ENCODE measurements at regions of chr1 and their contacts with region 1.

Region 1: DNA sequence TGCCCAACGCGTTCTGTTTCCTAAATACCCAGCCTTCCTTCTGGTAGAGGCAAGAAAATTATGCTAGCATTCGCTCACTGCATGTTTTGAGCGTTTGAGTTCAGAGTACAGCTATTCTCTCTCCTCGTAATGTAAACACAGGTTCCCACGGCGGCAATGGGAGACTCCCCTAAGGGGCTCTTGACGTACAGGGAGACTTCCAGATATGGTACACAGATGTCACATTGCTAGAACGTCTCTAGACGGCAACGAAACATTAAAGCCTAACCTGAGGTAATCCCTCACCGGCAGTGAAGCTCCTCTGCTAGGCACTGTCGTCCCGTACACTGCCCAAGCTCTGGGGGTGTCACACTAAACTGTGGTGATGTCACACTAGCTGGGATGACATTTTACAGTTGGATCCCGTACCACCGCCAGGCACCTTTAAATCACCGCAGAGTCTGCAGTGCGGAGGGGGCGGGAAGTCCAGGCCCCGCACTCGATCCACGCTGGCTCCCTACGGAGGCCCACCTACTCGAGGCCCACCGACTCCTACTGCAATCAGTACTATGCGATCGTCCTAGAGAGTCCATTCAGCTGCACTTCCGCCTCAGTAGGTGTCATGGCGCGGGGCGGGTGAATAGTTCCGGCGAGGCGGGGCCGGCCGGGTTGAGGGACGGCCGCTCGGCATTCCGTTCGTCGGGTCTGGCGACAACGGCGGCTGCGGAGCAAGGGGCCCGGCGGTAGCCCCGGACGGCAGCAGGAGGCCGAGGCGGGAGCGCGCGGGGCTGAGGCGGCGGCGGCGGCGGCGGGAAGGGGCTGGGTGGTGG is at the start of gene HIPK1:
- DNase-seq: peak; percentile 60
- ATAC-seq: peak; percentile 73
- H3K4me3 ChIP-seq: peak within 1 kb of the TSS; percentile 78
- H3K27ac ChIP-seq: peak within 1 kb of the TSS; percentile 97
- H3K4me1 ChIP-seq: peaks cover 4% of the 10 kb centered on the region
- H3K27me3 ChIP-seq: no peaks in the 10 kb centered on the region
- CTCF ChIP-seq: no peak
- EP300 ChIP-seq: 0 out of 4 replicates have a peak, but pooled peaks of 1 of the 2 experiments have one; percentile 36
- POLR2A ChIP-seq: peak; percentile 88
- RAD21 ChIP-seq: 0 out of 2 replicates have a peak, but pooled peaks have one; percentile 7
- polyA plus RNA-seq, gene HIPK1: 4.2 to 4.5 TPM

Region 2: DNA sequence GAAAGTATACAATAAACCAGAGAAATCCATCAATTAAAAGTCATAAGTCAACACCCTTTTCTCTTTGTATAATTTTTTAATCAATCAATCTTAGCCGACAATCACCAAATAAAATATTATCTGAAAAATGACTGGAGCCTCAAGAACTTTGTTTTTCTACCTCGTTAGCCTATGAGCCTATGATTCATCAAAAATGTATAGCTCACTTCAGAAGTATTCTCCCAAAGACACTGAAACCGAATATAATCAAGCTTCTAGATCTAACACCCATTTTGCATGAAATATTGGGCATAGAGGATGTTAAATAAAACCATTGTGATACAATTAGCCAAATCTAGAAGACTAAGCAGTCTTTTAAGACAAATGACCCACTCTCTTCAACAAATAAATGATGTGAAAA is 99.1 kb before region 1 on chr1:
- CTCF ChIA-PET with region 1: interaction called, 30 read pairs
- POLR2A ChIA-PET with region 1: interaction called, 6 read pairs
- RAD21 ChIA-PET with region 1: interaction called, 19 read pairs
- SMC1A ChIA-PET with region 1: interaction called, 32 read pairs
- in situ Hi-C with region 1: loop called (anchors 5 kb)
- intact Hi-C with region 1: loop called (anchors 5 kb)
- DNase-seq: no peak
- ATAC-seq: no peak
- H3K4me3 ChIP-seq: no peak overlapping the region
- H3K27ac ChIP-seq: no peak overlapping the region
- H3K4me1 ChIP-seq: no peaks in the 10 kb centered on the region
- H3K27me3 ChIP-seq: no peaks in the 10 kb centered on the region
- CTCF ChIP-seq: no peak
- EP300 ChIP-seq: no peak
- POLR2A ChIP-seq: no peak
- RAD21 ChIP-seq: no peak

Region 3: DNA sequence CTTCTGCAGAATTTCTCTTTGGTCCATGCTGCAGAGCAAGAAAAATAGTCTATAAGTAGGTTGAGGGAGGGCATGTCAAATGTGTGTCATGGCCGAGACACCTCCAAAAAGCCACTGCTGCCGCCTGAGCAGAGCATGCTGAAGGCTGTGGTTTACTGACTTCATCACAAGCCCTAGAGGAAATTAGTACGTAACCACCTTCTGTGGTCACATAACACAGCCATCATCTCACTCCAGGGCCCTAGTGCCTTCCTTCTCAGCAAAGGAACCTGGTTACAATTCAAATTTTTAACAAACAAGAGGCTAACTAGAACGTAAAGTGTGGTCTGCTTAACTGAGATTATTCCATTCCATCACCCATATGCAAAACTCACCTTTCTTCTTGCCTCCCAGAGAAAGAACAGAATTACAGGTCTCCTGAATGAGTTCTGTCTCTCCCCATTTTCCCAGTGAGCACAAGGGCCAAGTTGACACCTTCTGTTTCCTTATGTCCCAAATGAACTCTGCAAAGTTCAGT is 57.5 kb before region 1 on chr1 and contains the start of gene PTPN22:
- CTCF ChIA-PET with region 1: interaction called, 15 read pairs
- POLR2A ChIA-PET with region 1: interaction called, 23 read pairs
- RAD21 ChIA-PET with region 1: interaction called, 14 read pairs
- SMC1A ChIA-PET with region 1: interaction called, 17 read pairs
- in situ Hi-C with region 1: no loop called
- intact Hi-C with region 1: no loop called
- DNase-seq: peak; percentile 90
- ATAC-seq: peak; percentile 87
- H3K4me3 ChIP-seq: peak within 1 kb of the TSS; percentile 89
- H3K27ac ChIP-seq: peak within 1 kb of the TSS; percentile 79
- H3K4me1 ChIP-seq: peaks cover 47% of the 10 kb centered on the region
- H3K27me3 ChIP-seq: no peaks in the 10 kb centered on the region
- CTCF ChIP-seq: no peak
- EP300 ChIP-seq: peak in 1 of 2 experiments; percentile 86; a peak in 3 of 4 replicates
- POLR2A ChIP-seq: peak; percentile 90
- RAD21 ChIP-seq: no peak
- polyA plus RNA-seq, gene PTPN22: 30.3 to 32.3 TPM

Region 4: GRCh38 chr1:113916974-113917373 is 12.2 kb before region 1 on chr1:
- CTCF ChIA-PET with region 1: interaction called, 7 read pairs
- POLR2A ChIA-PET with region 1: interaction called, 8 read pairs
- RAD21 ChIA-PET with region 1: interaction called, 8 read pairs
- SMC1A ChIA-PET with region 1: interaction called, 16 read pairs
- in situ Hi-C with region 1: no loop called
- intact Hi-C with region 1: no loop called
- DNase-seq: no peak
- ATAC-seq: no peak
- H3K4me3 ChIP-seq: no peak overlapping the region
- H3K27ac ChIP-seq: no peak overlapping the region
- H3K4me1 ChIP-seq: no peaks in the 10 kb centered on the region
- H3K27me3 ChIP-seq: no peaks in the 10 kb centered on the region
- CTCF ChIP-seq: no peak
- EP300 ChIP-seq: no peak
- POLR2A ChIP-seq: no peak
- RAD21 ChIP-seq: no peak

Region 5: GRCh38 chr1:113963281-113963906 is 34.2 kb after region 1 on chr1:
- CTCF ChIA-PET with region 1: interaction called, 12 read pairs
- POLR2A ChIA-PET with region 1: interaction called, 5 read pairs
- RAD21 ChIA-PET with region 1: interaction called, 4 read pairs
- SMC1A ChIA-PET with region 1: interaction called, 7 read pairs
- in situ Hi-C with region 1: no loop called
- intact Hi-C with region 1: no loop called
- DNase-seq: no peak
- ATAC-seq: no peak
- H3K4me3 ChIP-seq: no peak overlapping the region
- H3K27ac ChIP-seq: no peak overlapping the region
- H3K4me1 ChIP-seq: no peaks in the 10 kb centered on the region
- H3K27me3 ChIP-seq: no peaks in the 10 kb centered on the region
- CTCF ChIP-seq: peak in 1 of 3 experiments; percentile 31; a peak in 2 of 6 replicates
- EP300 ChIP-seq: no peak
- POLR2A ChIP-seq: no peak
- RAD21 ChIP-seq: peak; percentile 36; the same call in 1 of the 2 replicates

Measured in GM12878 (cell line).